ENCODE measurements at regions of chr15 and their contacts with region 1.

Region 1: DNA sequence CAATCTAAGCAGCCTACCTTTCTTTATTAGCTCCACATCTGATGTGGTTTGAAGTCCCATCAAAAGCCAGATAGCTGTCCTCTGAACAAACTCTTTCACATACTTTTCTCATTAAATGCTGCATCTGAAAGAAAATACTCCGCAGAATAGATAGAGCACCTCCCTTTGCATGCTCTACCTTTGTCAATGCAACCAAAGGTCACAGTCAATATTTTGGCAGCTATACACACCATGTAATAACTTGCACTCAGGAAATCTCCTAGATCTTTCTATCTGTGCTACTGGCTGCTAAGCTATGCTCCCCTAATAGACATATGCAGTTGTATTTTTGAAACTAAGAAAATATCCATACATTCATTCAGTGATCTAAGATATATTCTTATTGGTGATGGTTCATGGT is 204.8 kb upstream of the ARRDC4 start:
- DNase-seq: no peak
- ATAC-seq: no peak
- H3K4me3 ChIP-seq: no peak overlapping the region
- H3K27ac ChIP-seq: no peak overlapping the region
- H3K4me1 ChIP-seq: no peaks in the 10 kb centered on the region
- CTCF ChIP-seq: no peak
- EP300 ChIP-seq: no peak
- POLR2A ChIP-seq: no peak
- RAD21 ChIP-seq: no peak

Region 2: DNA sequence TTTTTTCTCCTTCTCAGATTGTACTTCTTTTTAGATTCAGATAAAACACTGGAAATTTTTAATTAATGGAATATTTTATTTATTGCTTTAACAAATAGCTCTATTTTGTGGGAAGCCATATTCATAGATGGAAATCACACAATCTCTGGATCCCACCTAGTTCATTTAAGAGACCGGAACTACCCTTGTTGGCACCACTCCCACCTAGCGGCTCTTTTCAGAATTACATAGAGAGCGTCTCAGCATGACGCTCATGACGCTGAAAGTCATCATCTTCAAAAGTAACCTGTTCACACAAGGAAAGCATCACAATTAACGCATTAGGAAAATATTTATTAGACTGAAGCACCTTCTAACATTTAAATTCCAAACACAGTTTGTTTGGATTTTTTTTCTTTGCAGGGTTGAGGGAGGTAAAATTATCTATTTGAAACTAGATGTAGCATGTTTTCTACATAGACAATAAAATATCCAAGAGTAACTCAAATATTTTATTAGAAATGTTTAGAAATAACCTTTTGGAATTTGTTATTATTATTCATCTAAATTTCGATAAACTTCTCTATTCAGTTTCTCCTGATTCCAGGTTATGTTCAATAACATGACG is 10.2 kb before region 1 on chr15:
- CTCF ChIA-PET with region 1: interaction called, 12 read pairs
- POLR2A ChIA-PET with region 1: no interaction called
- DNase-seq: peak; percentile 34 to 60
- ATAC-seq: peak; percentile 66 to 84; a peak in 4 of 6 replicates
- H3K4me3 ChIP-seq: no peak overlapping the region
- H3K27ac ChIP-seq: no peak overlapping the region
- H3K4me1 ChIP-seq: no peaks in the 10 kb centered on the region
- CTCF ChIP-seq: peak; percentile 58
- EP300 ChIP-seq: no peak
- POLR2A ChIP-seq: no peak
- RAD21 ChIP-seq: peak; percentile 42 to 51; a peak in 4 of 5 replicates